SK-N-SH (cell line): ENCODE measurements at regions of chrX and their contacts with region 1.

Region 1: GRCh38 chrX:39814391-39814790 is 283.4 kb downstream of the BCOR start:
- DNase-seq: no peak
- H3K4me3 ChIP-seq: no peak overlapping the region
- H3K27ac ChIP-seq: peak overlapping the region; percentile 8 to 91
- H3K4me1 ChIP-seq: peaks cover 0 to 64% of the 10 kb centered on the region in 2 experiments; a peak in 1 of 4 replicates
- H3K27me3 ChIP-seq: peaks cover 5% of the 10 kb centered on the region
- CTCF ChIP-seq: peak; percentile 70
- EP300 ChIP-seq: no peak
- RAD21 ChIP-seq: peak; percentile 62

Region 2: DNA sequence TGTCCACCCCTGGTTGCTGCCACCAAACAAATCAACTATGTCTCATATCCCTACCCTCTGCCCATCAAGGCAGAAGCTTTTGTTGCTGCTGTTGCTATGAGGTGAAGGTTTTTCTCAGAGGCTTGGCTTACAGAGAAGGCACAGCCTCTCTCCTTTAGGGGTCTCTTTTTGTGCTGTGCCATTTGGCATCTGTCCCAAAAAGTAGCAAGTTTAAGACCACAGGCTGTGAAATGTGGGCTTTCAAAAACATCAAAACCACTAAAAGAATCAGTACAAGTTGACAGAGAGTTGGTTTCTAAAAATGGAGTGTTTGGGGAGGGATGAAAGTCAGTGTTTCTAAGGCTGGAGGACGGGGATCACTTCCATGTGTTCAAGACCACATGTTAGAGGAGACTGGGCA is 351.6 kb before region 1 on chrX:
- CTCF ChIA-PET with region 1: no interaction called
- POLR2A ChIA-PET with region 1: no interaction called
- DNase-seq: no peak
- H3K4me3 ChIP-seq: no peak overlapping the region
- H3K27ac ChIP-seq: no peak overlapping the region
- H3K4me1 ChIP-seq: no peaks in the 10 kb centered on the region; a peak in 1 of 4 replicates
- H3K27me3 ChIP-seq: no peaks in the 10 kb centered on the region; the same call in 1 of the 2 replicates
- CTCF ChIP-seq: no peak
- EP300 ChIP-seq: no peak
- RAD21 ChIP-seq: no peak

Region 3: GRCh38 chrX:39730662-39731397 is 83.6 kb before region 1 on chrX:
- CTCF ChIA-PET with region 1: interaction called, 17 read pairs
- POLR2A ChIA-PET with region 1: interaction called, 4 read pairs
- DNase-seq: peak; percentile 63
- H3K4me3 ChIP-seq: no peak overlapping the region; a peak in 1 of 4 replicates
- H3K27ac ChIP-seq: peak overlapping the region; percentile 20 to 97; a peak in 3 of 4 replicates
- H3K4me1 ChIP-seq: peaks cover 0 to 63% of the 10 kb centered on the region in 2 experiments; a peak in 2 of 4 replicates
- H3K27me3 ChIP-seq: peaks cover 10% of the 10 kb centered on the region; the same call in 1 of the 2 replicates
- CTCF ChIP-seq: peak; percentile 72
- EP300 ChIP-seq: no peak
- RAD21 ChIP-seq: peak; percentile 78

Region 4: DNA sequence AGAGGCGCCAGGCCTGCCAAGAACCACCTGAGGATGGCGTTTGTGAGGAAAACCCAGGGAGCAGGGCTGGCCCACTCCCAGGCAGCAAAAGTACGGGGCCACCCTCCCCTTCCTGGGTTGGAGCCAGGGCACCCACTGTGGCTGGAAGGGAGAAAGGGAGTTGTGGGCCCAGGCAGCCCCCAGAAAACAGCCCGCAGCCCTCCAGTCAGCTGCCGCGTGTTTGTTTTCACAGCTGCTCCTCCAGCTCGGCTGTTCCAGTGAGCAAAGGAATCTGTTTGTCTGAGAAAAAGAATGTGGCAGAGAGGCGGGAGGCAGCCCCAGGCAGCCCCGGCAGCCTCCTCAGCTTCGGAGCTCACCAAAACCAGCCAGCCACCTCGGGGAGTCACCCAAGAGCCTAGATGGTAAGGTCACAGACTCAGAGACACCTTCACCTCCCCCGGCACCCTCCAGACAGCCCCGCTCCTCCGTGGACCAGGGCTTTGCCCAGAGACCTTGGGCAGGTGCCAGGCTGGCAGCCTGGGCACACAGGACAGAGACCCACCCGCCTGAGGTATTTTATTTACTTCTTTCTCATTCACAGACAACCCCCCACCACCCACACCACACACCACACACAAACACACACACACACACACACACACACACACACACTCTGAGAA is 54.7 kb before region 1 on chrX:
- CTCF ChIA-PET with region 1: no interaction called
- POLR2A ChIA-PET with region 1: no interaction called
- DNase-seq: peak; percentile 39
- H3K4me3 ChIP-seq: no peak overlapping the region
- H3K27ac ChIP-seq: peak overlapping the region in 1 of 2 experiments; percentile 22; a peak in 1 of 4 replicates
- H3K4me1 ChIP-seq: peaks cover 24 to 31% of the 10 kb centered on the region in 2 experiments; a peak in 3 of 4 replicates
- H3K27me3 ChIP-seq: no peaks in the 10 kb centered on the region
- CTCF ChIP-seq: no peak
- EP300 ChIP-seq: peak in 1 of 2 experiments; percentile 24; a peak in 1 of 4 replicates
- RAD21 ChIP-seq: no peak

Region 5: DNA sequence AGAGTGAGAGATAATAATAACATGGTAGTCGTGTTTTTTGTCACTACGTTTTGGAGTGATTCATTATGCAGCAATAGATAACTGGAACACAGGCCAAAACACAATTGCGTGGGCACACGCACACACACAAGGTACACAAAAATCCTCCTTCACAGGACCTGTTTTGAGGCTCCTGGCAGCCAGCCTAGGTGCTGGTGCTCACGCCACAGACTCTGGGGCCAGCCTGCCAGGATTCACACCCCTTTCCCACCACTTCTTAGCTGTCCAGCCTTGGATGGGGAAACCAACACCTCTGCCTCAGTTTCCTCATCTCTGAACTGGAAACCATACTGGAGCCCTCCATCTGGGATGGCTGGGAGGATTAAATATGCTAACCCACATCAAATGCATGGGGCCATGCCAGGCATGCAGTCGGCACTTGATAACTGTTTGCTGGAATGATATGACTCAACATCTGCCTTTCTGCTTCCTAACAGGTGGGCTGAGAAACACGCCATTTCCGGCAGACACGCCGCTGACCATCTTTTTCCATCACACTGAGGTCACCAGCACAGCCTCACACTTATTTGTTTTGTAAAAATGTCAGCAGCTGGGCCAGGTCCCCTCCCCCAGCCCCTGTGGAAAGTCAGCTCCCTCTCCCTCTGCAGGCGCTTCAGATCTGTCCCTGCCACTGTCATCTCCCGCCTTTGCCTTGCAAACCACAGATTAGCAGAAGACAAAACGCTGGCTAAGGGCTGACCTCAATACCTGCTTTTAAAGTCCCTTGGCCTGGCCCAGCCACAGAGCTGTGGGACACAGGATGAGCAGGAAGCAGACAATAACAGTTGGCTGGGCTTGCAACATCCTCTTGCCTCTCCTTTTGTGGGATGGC is 45.8 kb after region 1 on chrX:
- CTCF ChIA-PET with region 1: no interaction called
- POLR2A ChIA-PET with region 1: no interaction called
- DNase-seq: peak; percentile 48
- H3K4me3 ChIP-seq: no peak overlapping the region
- H3K27ac ChIP-seq: peak overlapping the region in 1 of 2 experiments; percentile 17; a peak in 1 of 4 replicates
- H3K4me1 ChIP-seq: peaks cover 7 to 21% of the 10 kb centered on the region in 2 experiments; a peak in 2 of 4 replicates
- H3K27me3 ChIP-seq: no peaks in the 10 kb centered on the region; the same call in 1 of the 2 replicates
- CTCF ChIP-seq: no peak
- EP300 ChIP-seq: no peak
- RAD21 ChIP-seq: no peak

Region 6: DNA sequence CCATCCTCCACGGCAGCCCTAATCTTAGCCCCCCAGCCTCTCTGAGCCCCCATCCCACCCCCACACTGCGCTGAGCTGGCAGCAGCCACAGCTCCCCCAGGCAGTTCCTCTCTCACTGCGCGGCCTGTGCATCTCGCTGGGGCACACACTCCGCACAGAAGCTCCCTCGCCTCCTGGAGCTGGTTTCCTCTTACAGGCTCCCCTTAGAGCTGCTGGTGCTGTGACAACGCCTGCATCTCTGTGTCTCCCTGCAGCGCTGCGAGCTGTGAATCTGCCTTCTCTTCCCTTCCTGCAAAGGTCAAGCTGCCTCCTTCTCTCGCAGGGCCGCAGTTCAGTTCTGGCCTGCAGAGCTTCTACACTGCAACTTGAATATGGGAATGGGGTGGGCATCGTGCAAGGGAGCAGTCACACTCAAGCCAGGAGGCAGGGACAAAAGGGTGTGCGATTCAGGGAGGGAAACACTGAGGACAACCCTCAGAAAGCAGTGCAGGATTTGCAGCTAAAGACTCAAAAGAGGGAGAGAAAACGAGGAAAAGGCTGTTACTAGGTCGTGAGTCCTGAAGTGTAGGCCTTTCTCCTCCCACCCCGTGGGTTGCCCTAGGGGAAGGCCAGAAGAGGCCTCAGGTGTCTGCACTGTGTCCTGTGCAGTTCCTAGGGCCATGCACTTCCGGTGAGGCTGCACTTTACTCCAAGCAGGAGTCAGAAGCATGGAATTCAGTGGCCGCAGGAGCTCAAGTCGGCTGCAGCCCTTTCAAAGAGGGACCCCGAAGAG is 196.3 kb after region 1 on chrX:
- CTCF ChIA-PET with region 1: interaction called, 3 read pairs
- POLR2A ChIA-PET with region 1: interaction called, 11 read pairs
- DNase-seq: peak; percentile 66
- H3K4me3 ChIP-seq: no peak overlapping the region
- H3K27ac ChIP-seq: peak overlapping the region in 1 of 2 experiments; percentile 95; a peak in 2 of 4 replicates
- H3K4me1 ChIP-seq: peaks cover 0 to 36% of the 10 kb centered on the region in 2 experiments; a peak in 1 of 4 replicates
- H3K27me3 ChIP-seq: peaks cover 24% of the 10 kb centered on the region; the same call in 1 of the 2 replicates
- CTCF ChIP-seq: no peak
- EP300 ChIP-seq: no peak
- RAD21 ChIP-seq: no peak